ENCODE measurements at regions of chr5 and their contacts with region 1.

Region 1: GRCh38 chr5:168227973-168228615 is 63.4 kb upstream of the WWC1 start:
- DNase-seq: peak; percentile 59
- H3K4me3 Mint-ChIP-seq: peak overlapping the region; percentile 38
- H3K27ac Mint-ChIP-seq: peak overlapping the region; percentile 87
- H3K4me1 Mint-ChIP-seq: peaks cover 17% of the 10 kb centered on the region
- H3K27me3 Mint-ChIP-seq: peaks cover 2% of the 10 kb centered on the region

Region 2: DNA sequence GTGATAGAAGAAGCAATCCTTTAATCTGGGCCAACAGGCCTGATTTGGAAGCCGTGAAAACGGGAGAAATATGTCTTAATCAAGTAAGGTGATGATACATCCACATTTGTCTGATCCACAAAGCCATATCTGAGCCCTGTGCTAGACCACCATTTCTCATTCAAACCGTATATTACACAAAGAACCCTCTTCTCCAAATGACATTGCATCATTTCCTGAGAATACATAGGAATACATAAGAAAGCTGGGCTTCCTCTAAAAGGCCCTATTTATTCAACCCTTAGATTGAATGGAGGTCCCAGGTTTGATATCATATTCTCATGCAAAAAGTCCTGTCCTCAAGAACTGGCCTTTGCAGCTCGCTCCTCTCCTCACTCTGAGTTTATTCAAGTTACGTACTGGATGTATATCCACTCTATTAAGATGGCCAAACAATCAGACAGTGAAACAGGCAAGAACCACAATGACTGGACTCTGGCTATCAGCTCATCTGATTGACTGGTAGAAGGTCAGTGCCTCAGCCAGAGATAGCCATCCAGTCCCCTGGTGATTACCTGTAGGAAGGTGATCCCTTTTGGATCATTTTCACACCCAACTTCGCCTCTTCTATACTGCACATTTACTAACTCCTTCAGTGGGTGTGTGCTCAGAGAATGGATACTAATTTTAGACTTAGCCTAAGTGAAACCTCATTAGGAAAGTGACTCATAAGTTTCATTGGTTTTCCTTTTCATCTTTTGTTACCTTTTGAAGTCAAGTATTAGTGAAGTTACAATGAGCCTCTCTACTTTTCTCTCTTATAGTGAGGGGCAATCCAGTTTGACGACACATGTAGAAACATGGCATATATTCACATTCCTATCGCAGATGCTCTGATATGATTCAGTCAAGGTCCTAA is 104.2 kb before region 1 on chr5:
- CTCF ChIA-PET with region 1: interaction called, 5 read pairs
- intact Hi-C with region 1: loop called (anchors 1 kb)
- DNase-seq: no peak
- H3K4me3 Mint-ChIP-seq: no peak overlapping the region
- H3K27ac Mint-ChIP-seq: no peak overlapping the region
- H3K4me1 Mint-ChIP-seq: peaks cover 29% of the 10 kb centered on the region
- H3K27me3 Mint-ChIP-seq: peaks cover 2% of the 10 kb centered on the region

Region 3: GRCh38 chr5:168244838-168245559 is 16.9 kb after region 1 on chr5:
- CTCF ChIA-PET with region 1: interaction called, 5 read pairs
- intact Hi-C with region 1: loop called (anchors 1 kb)
- DNase-seq: no peak
- H3K4me3 Mint-ChIP-seq: no peak overlapping the region
- H3K27ac Mint-ChIP-seq: no peak overlapping the region
- H3K4me1 Mint-ChIP-seq: peaks cover 18% of the 10 kb centered on the region
- H3K27me3 Mint-ChIP-seq: peaks cover 3% of the 10 kb centered on the region

Region 4: GRCh38 chr5:169656125-169656901 is 1428.2 kb after region 1 on chr5:
- CTCF ChIA-PET with region 1: no interaction called
- intact Hi-C with region 1: loop called (anchors 5 kb)
- DNase-seq: peak; percentile 61
- H3K4me3 Mint-ChIP-seq: peak overlapping the region; percentile 29
- H3K27ac Mint-ChIP-seq: peak overlapping the region; percentile 77
- H3K4me1 Mint-ChIP-seq: peaks cover 61% of the 10 kb centered on the region
- H3K27me3 Mint-ChIP-seq: no peaks in the 10 kb centered on the region

Measured in activated naive CD4-positive, alpha-beta T cell treated with anti-CD3 and anti-CD28 coated beads for 36 hours (primary cell).